MCF 10A (cell line): ENCODE measurements at regions of chr17 and their contacts with region 1.

Region 1: DNA sequence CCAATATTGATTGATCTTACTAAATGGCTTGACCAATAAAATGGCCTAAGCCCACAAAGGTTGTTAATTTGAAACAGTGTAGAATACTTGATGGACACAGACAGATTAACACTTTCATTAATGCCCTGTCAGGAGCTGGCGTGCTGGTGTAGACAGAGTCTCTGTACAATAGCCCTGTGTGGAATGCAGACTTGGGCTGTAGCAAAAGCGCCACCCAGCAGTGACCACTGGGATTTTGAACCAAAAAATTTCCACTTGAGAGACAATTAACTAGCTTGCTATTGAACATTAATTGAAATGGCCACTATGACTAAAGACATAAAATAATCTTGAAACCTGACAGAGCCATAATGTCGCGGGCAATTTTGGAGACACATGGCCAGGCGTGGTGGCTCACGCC is 19.7 kb upstream of the GUCY2D start:
- DNase-seq: peak; percentile 21
- H3K4me3 Mint-ChIP-seq: no peak overlapping the region
- H3K27ac Mint-ChIP-seq: no peak overlapping the region
- H3K4me1 Mint-ChIP-seq: peaks cover 15% of the 10 kb centered on the region
- H3K27me3 Mint-ChIP-seq: no peaks in the 10 kb centered on the region
- CTCF ChIP-seq: no peak

Region 2: GRCh38 chr17:7915611-7916382 is 66.9 kb before region 1 on chr17 and contains the start of gene RNF227:
- CTCF ChIA-PET with region 1: interaction called, 145 read pairs
- POLR2A ChIA-PET with region 1: interaction called, 5 read pairs
- intact Hi-C with region 1: loop called (anchors 1 kb)
- DNase-seq: peak; percentile 97
- H3K4me3 Mint-ChIP-seq: peak within 1 kb of the TSS; percentile 93
- H3K27ac Mint-ChIP-seq: peak within 1 kb of the TSS; percentile 95
- H3K4me1 Mint-ChIP-seq: peaks cover 26% of the 10 kb centered on the region
- H3K27me3 Mint-ChIP-seq: no peaks in the 10 kb centered on the region
- CTCF ChIP-seq: no peak
- total RNA-seq, gene RNF227: 5.6 and 7.4 TPM in 2 replicates

Region 3: GRCh38 chr17:8630802-8631553 is 648.3 kb after region 1 on chr17:
- CTCF ChIA-PET with region 1: no interaction called
- POLR2A ChIA-PET with region 1: no interaction called
- intact Hi-C with region 1: no loop called
- DNase-seq: peak; percentile 100
- H3K4me3 Mint-ChIP-seq: peak overlapping the region; percentile 97
- H3K27ac Mint-ChIP-seq: peak overlapping the region; percentile 92
- H3K4me1 Mint-ChIP-seq: peaks cover 16% of the 10 kb centered on the region
- H3K27me3 Mint-ChIP-seq: no peaks in the 10 kb centered on the region
- CTCF ChIP-seq: peak; percentile 18